ENCODE measurements at regions of chr1 and their contacts with region 1.

Region 1: GRCh38 chr1:95072532-95073419 is at the start of gene ALG14:
- DNase-seq: peak; percentile 87 to 97 (median 90)
- ATAC-seq: peak; percentile 90
- H3K4me3 ChIP-seq: peak within 1 kb of the TSS; percentile 77
- H3K4me3 Mint-ChIP-seq: peak within 1 kb of the TSS; percentile 98
- H3K27ac ChIP-seq: peak within 1 kb of the TSS; percentile 73 to 85
- H3K27ac Mint-ChIP-seq: peak within 1 kb of the TSS; percentile 95
- H3K4me1 ChIP-seq: peaks cover 13% of the 10 kb centered on the region
- H3K4me1 Mint-ChIP-seq: peaks cover 20% of the 10 kb centered on the region
- H3K27me3 ChIP-seq: peaks cover 0 to 6% of the 10 kb centered on the region in 2 experiments
- H3K27me3 Mint-ChIP-seq: peaks cover 4% of the 10 kb centered on the region
- CTCF ChIP-seq: no peak
- total RNA-seq, gene ALG14: 0.08 to 0.52 TPM

Region 2: DNA sequence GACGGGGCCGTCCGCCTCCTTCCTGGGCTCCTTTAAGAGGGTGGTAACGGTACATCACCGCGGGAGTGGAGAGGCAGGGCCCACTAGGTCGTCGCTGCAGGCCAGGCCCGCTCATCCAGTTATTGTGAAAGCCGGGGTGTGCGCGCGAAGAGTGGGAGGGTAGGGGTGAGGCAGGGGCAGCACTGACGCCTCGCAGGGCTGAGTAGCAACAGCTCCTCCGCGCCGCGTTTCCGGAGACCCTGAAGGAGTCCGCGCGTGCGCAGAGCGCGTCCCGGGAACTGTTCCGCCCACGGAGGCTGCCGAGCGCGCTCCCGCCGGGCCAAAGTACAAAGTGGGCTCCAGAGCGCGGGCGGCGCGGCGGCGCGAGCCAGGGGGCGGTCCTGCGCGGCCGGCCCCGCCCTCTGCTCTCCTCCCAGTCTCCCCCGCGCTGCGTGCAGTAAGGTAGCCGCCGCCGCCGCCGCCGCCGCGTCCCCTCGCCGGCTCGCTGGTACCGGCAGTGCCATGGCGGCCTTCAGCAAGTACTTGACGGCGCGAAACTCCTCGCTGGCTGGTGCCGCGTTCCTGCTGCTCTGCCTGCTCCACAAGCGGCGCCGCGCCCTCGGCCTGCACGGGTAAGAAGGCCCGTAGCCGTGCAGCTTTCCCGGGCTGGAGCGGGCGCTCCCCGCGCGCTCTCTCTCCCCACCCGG is 654.7 kb before region 1 on chr1 and contains the start of gene ABCD3:
- CTCF ChIA-PET with region 1: no interaction called
- POLR2A ChIA-PET with region 1: interaction called, 5 read pairs
- intact Hi-C with region 1: loop called (anchors 2 to 5 kb)
- DNase-seq: peak; percentile 92 to 99 (median 97)
- ATAC-seq: peak; percentile 87
- H3K4me3 ChIP-seq: peak within 1 kb of the TSS; percentile 82
- H3K4me3 Mint-ChIP-seq: no peak within 1 kb of the TSS
- H3K27ac ChIP-seq: peak within 1 kb of the TSS; percentile 61 to 77
- H3K27ac Mint-ChIP-seq: no peak within 1 kb of the TSS
- H3K4me1 ChIP-seq: peaks cover 14% of the 10 kb centered on the region
- H3K4me1 Mint-ChIP-seq: peaks cover 41% of the 10 kb centered on the region
- H3K27me3 ChIP-seq: no peaks in the 10 kb centered on the region
- H3K27me3 Mint-ChIP-seq: no peaks in the 10 kb centered on the region
- CTCF ChIP-seq: no peak
- total RNA-seq, gene ABCD3: 13.0 to 13.5 TPM

Region 3: GRCh38 chr1:95116580-95117206 is 43.9 kb after region 1 on chr1:
- CTCF ChIA-PET with region 1: no interaction called
- POLR2A ChIA-PET with region 1: interaction called, 15 read pairs
- intact Hi-C with region 1: no loop called
- DNase-seq: peak; percentile 14 to 75 (median 42)
- ATAC-seq: peak; percentile 78
- H3K4me3 ChIP-seq: peak overlapping the region; percentile 69
- H3K4me3 Mint-ChIP-seq: peak overlapping the region; percentile 96
- H3K27ac ChIP-seq: no peak overlapping the region
- H3K27ac Mint-ChIP-seq: no peak overlapping the region
- H3K4me1 ChIP-seq: peaks cover 12% of the 10 kb centered on the region
- H3K4me1 Mint-ChIP-seq: peaks cover 4% of the 10 kb centered on the region
- H3K27me3 ChIP-seq: peaks cover 24 to 26% of the 10 kb centered on the region in 2 experiments
- H3K27me3 Mint-ChIP-seq: peaks cover 66% of the 10 kb centered on the region
- CTCF ChIP-seq: peak; percentile 76

Region 4: DNA sequence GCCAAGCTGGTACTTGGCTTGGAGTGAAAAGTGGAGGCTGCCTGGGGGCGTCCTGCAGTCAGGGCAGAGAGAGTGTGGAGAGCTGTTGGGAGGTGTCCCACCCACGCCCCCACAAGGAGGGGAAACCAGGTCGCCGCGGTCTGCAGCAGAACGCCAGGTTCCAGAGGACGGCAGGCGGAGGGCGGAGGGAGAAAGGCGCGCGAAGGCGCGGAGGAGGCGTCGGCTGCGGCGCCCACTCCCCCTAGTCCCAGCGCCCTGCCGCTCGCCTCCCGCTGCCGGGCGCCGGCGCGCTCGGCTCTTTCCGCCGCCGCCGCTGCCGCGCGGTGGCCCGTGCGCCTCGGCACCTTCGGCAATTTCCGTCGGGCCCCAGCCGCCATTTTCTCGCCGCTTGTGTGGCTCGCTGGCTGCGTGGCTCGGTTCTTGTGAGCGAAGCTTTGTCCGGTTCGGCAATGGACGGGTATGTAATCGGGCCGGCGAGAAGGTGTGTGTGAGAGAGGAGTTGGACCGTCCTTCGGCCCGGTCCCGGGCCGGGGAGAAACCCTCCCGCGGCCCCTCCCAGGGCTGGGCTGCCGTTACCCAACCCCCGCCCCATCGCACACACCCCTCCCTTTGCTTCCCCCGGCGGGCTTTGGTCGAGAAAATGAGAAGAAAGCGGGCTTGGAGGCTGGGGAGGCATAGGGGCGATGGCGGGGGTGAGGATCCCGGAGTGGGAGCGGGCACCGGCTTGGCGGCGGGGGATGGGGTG is 1648.8 kb after region 1 on chr1 and contains the start of gene PTBP2:
- CTCF ChIA-PET with region 1: no interaction called
- POLR2A ChIA-PET with region 1: no interaction called
- intact Hi-C with region 1: loop called in 1 of 2 experiments (anchors 5 kb)
- DNase-seq: peak; percentile 67 to 92 (median 78)
- ATAC-seq: peak; percentile 89
- H3K4me3 ChIP-seq: peak within 1 kb of the TSS; percentile 85
- H3K4me3 Mint-ChIP-seq: peak within 1 kb of the TSS; percentile 98
- H3K27ac ChIP-seq: peak within 1 kb of the TSS; percentile 86
- H3K27ac Mint-ChIP-seq: peak within 1 kb of the TSS; percentile 94
- H3K4me1 ChIP-seq: peaks cover 20% of the 10 kb centered on the region
- H3K4me1 Mint-ChIP-seq: peaks cover 33% of the 10 kb centered on the region
- H3K27me3 ChIP-seq: no peaks in the 10 kb centered on the region
- H3K27me3 Mint-ChIP-seq: no peaks in the 10 kb centered on the region
- CTCF ChIP-seq: no peak
- total RNA-seq, gene PTBP2: 32.6 to 34.3 TPM